GM10248 (cell line): ENCODE measurements at regions of chr6 and their contacts with region 1.

Region 1: DNA sequence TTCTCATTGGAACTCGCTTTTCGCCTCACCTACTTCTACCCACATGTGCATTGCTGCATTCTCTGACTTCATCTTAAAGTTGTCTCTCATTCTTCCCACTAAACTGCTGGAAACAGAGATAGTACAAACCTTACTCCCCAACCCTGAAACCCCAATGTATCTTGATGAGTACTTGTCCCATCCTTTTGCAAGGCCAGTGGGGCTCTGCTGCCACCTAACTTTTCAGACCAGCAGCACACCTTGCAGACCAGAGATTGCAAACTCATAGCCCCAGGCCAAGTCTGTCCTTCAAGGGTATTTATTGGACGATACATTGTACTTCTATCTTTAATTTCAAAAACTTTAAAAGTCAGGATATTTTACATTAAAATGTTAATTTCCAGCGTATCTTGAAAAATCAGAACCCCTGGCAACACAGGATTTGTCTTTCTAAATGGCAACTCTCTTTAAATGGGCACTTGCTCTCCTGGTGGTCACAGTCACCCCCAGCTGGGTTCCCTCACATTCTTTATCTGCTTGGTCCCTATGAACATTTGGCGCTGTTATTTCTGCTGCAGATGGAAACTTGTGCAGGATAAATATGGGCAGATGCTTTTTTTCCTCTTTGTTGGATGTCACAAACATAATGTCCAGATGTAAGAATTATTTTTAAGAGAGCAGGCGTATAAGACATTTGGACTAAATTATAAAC is 83.9 kb downstream of the SOD2 start:
- DNase-seq: peak; percentile 57
- CTCF ChIP-seq: peak; percentile 66

Region 2: DNA sequence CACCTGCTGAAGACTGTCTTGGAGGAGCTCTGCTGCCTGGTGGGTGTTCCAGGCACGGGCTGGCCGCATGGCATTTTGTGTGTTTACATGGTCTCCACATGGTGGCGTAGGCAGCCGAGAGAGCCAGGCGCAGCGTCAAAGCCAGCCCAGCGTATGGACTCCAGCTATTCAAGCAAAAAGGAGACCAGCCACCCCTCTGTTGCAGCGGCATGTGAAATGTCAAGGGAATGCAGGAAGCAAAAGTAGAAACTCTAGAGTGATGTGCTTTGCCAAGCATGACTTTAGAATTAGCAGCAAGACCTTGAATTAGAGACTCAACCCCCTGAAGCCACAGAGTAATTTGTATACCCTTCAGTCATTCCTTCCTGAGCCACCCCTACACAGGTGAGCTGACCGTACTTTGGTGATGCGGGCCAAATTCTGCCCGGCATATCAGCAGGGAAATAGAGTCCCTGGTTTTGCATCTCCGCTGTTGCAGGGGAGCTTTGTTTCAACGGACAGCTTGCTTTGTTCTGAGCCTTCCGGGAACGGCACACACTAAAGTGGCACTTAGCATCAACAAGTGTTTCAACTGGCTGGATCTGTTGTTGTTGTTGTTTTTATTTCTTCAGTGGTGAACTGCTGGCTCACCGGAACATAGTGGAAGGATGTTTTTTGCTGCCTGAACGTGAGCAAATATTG is 391.4 kb before region 1 on chr6:
- CTCF ChIA-PET with region 1: interaction called, 10 read pairs
- POLR2A ChIA-PET with region 1: no interaction called
- DNase-seq: peak; percentile 67
- CTCF ChIP-seq: peak; percentile 54